ENCODE measurements at regions of chr4 and their contacts with region 1.

Region 1: GRCh38 chr4:146124023-146124662 is 51.4 kb upstream of the LSM6 start:
- DNase-seq: peak; percentile 33 to 60
- H3K4me3 ChIP-seq: no peak overlapping the region
- H3K27ac ChIP-seq: no peak overlapping the region
- H3K4me1 ChIP-seq: no peaks in the 10 kb centered on the region
- H3K27me3 ChIP-seq: no peaks in the 10 kb centered on the region; a peak in 1 of 7 replicates
- CTCF ChIP-seq: peak; percentile 36 to 54 (median 39)
- EP300 ChIP-seq: no peak
- POLR2A ChIP-seq: no peak
- RAD21 ChIP-seq: peak; percentile 30 to 35; a peak in 3 of 4 replicates

Region 2: DNA sequence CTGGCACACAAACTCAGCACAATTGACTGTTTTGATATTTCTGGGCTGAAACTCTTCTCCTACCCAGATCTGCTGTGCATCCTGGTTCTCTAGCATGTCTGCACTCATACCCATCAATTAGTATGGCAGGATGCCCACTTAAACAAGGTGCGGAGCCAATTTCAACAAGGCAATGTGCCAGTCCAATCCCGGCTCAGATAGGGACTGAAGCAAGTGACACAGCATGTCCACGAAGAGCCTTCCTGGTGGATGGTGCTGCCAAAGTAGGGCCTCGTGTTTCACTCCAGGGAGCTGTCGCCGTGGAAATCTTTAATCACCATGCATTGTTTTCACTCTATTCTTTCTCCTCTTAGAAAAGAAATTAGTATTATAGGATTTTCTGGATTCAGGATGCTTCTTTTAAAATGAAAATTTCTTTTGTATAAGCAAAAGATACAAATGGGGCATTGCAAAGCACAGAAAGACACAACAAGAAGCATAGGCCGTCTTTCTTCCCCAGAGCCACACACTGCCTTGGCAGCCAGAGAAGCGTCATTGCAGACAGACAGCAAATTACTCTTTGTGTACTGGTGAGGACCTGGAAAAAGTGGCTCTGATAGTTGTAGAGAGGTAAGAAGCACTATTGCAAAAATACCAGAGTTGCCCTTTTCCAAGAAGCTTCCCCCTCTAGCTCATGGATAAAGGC is 10.8 kb after region 1 on chr4:
- CTCF ChIA-PET with region 1: interaction called, 12 read pairs
- POLR2A ChIA-PET with region 1: interaction called, 5 read pairs
- DNase-seq: no peak
- H3K4me3 ChIP-seq: no peak overlapping the region
- H3K27ac ChIP-seq: no peak overlapping the region
- H3K4me1 ChIP-seq: peaks cover 0 to 7% (median 2%) of the 10 kb centered on the region in 4 experiments; a peak in 3 of 7 replicates
- H3K27me3 ChIP-seq: no peaks in the 10 kb centered on the region
- CTCF ChIP-seq: no peak
- EP300 ChIP-seq: no peak
- POLR2A ChIP-seq: no peak
- RAD21 ChIP-seq: no peak

Region 3: DNA sequence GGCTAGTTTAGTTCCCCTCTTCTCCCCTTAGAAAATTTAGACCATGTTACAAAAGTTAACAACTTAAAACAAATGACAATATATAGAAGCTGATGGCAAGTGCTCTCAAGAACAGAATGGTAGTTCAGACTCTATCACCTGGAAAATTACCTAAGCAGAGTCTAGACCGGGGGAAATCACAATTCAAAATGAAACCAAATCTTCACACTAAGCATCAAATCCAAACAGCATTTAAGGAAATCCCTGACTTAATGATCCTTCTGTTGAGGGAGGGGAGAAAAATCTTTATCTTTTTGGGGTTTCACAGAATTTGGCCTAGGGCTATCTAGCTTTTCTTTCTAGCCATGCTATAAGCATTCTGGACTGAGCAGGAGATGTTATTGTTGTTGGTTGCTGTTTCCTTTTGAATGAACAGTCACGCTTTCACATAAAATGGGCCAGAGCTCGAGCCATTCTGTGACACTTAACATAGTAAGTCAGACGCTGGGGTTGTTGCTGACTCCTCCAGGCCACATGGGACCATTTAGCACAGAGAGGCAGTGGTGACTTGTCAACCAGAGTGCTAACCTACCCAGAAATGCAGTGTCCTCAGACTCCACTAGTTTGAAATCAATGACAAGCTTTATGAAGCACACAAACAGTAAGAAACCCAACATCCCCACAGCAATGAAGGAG is 35.4 kb after region 1 on chr4:
- CTCF ChIA-PET with region 1: interaction called, 14 read pairs
- POLR2A ChIA-PET with region 1: no interaction called
- DNase-seq: no peak
- H3K4me3 ChIP-seq: no peak overlapping the region
- H3K27ac ChIP-seq: no peak overlapping the region
- H3K4me1 ChIP-seq: no peaks in the 10 kb centered on the region
- H3K27me3 ChIP-seq: no peaks in the 10 kb centered on the region
- CTCF ChIP-seq: no peak
- EP300 ChIP-seq: no peak
- POLR2A ChIP-seq: no peak
- RAD21 ChIP-seq: no peak

Region 4: GRCh38 chr4:146359771-146360170 is 235.6 kb after region 1 on chr4:
- CTCF ChIA-PET with region 1: no interaction called
- POLR2A ChIA-PET with region 1: no interaction called
- DNase-seq: no peak
- H3K4me3 ChIP-seq: no peak overlapping the region
- H3K27ac ChIP-seq: no peak overlapping the region
- H3K4me1 ChIP-seq: no peaks in the 10 kb centered on the region
- H3K27me3 ChIP-seq: no peaks in the 10 kb centered on the region
- CTCF ChIP-seq: no peak
- EP300 ChIP-seq: no peak
- POLR2A ChIP-seq: no peak
- RAD21 ChIP-seq: no peak